Gastrocnemius medialis (tissue), 4 donors: ENCODE measurements at regions of chr1 and their contacts with region 1.

Region 1: DNA sequence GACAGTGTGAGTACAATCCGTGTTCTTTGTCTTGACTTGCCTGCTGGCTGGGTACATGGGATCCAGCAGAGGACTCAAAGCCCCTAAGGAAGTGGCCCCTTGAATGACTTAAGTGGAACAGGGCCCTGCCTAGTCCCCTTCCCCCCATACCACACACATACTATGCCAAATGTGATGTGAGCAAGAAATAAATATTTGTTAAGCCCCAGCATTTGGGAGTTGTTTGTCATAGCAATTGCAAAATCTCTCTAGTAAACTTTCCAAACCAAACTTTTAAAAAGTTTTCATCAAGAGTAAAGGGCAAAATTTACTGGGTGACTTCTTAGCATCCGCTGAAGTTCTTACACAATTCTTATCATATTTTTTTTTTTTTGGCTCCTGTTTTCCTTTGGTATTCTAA is 32.5 kb upstream of the CACHD1 start:
- DNase-seq: no peak
- ATAC-seq: no peak
- H3K4me3 ChIP-seq: no peak overlapping the region
- H3K27ac ChIP-seq: no peak overlapping the region
- H3K4me1 ChIP-seq: no peaks in the 10 kb centered on the region
- H3K27me3 ChIP-seq: no peaks in the 10 kb centered on the region
- CTCF ChIP-seq: no peak
- POLR2A ChIP-seq: no peak

Region 2: DNA sequence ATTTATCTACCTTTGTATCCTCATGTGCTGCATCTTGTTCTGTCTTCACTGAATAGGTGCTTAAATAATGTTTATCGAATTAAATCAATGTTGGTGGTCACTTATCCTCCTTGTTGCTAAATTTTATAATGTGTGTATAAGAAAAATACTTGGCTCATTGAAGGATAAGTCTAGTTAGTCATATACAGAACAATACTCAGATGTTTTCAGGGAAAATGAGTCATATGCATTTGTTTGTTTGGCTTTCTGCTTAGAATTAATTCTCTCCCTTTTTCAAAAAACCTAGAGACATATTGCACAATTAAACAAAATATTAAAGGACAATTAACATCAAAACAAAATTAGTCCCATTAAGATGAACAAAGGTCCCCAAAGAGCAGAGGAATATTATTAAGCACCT is 145.1 kb before region 1 on chr1:
- in situ Hi-C with region 1: no loop called
- intact Hi-C with region 1: loop called (anchors 5 kb)
- DNase-seq: no peak
- ATAC-seq: no peak
- H3K4me3 ChIP-seq: no peak overlapping the region
- H3K27ac ChIP-seq: no peak overlapping the region
- H3K4me1 ChIP-seq: no peaks in the 10 kb centered on the region
- H3K27me3 ChIP-seq: no peaks in the 10 kb centered on the region
- CTCF ChIP-seq: no peak
- POLR2A ChIP-seq: no peak

Region 3: DNA sequence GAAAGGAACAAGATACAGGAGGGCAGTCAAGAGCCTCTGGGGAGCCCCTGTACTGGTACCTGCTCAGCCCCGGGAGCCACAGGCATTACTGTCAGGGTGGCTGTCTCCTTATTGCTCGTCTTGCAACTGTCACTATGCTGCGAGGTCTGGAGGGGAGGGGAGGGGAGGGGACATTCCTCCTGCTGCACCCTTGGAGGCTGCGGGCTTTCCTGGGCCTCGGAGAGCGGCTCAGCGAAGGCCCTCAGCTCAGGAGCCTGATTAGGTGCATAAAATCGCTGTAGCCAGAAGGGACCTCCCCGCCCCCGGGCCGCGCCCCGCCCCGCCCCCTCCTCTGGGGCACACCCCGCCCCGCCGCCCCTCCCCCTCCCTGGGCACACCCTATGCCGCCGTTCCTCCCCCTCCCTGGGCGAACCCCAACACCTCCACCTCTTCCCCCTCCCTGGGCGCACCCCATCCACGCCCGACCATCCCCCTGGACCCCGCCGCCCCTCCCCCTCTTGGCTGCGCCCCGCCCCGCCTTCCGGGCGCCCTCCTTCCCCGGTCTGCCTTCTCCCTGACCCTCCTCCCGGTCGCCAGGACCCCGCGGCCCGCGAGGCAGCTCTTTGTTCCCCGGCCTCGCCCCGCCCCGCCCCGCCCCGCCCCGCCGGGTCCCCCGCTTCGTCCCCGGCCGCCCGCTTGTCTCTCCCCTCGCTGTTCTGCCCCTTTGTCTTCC is 67.9 kb after region 1 on chr1:
- in situ Hi-C with region 1: no loop called
- intact Hi-C with region 1: no loop called
- DNase-seq: peak; percentile 4 to 27
- ATAC-seq: peak; percentile 48 to 57
- H3K4me3 ChIP-seq: peak overlapping the region; percentile 54 to 64 (median 58)
- H3K27ac ChIP-seq: peak overlapping the region; percentile 10 to 55 (median 36)
- H3K4me1 ChIP-seq: peaks cover 8 to 22% of the 10 kb centered on the region in 2 donors
- H3K27me3 ChIP-seq: no peaks in the 10 kb centered on the region
- CTCF ChIP-seq: no peak
- POLR2A ChIP-seq: no peak